ENCODE measurements at regions of chr11 and their contacts with region 1.

Region 1: DNA sequence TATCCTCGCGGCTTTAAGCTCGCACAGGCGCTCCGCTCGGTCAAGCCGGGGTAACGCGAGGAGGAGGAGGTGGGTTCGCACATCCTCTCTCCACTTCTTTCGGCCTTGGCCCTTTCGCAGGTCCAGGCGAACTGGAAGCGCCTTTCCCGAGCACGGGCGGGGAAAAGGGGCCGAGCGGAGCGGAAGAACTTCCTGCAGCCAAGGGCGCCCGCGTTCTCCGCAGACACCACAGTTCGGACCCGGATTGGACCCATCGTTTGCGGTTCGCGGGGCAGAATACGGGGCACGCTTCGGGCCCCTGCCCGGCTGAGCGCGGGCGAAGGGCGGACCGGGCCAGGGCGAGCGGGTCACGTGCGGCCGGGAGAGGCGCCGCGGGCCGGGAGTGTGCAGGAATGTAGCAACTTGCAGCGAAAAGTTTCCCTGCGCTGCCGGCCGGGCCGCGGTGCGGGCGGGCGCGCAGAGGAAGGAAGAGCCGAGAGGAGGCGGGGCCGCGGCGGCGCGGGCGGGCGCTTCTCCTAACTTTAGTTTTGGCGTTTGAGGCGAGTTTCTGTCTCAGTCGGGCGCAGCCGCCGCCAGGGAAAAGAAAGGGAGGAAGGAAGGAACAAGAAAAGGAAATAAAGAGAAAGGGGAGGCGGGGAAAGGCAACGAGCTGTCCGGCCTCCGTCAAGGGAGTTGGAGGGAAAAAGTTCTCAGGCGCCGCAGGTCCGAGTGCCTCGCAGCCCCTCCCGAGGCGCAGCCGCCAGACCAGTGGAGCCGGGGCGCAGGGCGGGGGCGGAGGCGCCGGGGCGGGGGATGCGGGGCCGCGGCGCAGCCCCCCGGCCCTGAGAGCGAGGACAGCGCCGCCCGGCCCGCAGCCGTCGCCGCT is at the start of gene YAP1:
- DNase-seq: peak; percentile 94
- ATAC-seq: peak; percentile 90
- total RNA-seq, gene YAP1: 98.6 TPM

Region 2: DNA sequence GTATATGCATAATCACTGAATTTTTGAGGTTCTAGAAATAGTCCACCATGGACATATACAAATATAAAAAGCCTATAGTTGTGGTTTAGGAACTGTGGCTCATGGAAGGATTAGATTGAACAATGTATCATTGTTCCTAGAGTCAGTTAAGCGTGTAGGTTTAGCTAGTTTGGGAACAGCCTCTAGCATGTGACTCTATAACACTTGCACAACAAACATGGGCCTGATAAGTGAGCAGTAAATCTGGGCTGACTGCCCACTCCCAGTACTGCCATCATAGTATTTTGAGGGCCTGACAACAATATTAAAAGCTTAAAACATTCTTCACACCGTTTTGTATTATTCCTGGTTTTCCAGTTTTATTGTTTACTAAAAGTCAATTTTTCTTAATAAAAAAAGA is 47.1 kb after region 1 on chr11:
- intact Hi-C with region 1: loop called (anchors 5 kb)
- DNase-seq: peak; percentile 68
- ATAC-seq: peak; percentile 95

Region 3: DNA sequence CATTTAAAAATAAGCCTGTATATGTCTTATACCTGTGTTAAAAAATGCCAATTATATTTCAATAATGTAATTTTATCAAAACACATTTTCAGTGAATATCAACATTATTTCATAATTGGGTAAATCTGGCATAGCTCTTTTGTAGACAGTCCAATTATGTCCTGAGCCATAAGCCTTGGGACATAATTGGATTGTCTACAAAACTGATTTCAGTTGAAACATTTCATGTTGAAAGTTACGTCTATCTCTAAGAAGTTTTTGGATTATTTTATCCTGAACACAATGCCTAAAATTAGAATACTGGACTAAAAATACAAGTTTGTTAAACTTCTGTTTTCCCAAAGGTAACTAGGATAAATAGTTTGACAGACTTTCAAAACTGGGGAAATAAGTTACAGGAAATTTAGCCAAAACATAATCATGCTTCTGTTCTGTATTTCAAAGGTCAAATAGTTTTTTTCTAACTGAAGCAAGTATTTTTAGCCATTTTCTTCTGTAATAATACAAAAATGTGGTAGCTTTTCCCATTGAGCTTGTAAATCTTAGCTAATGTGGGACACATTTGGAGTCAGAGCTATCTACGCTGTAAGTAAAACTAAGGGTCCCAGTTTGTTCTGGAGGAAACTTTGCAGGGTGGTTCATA is 106.4 kb after region 1 on chr11:
- intact Hi-C with region 1: loop called (anchors 10 kb)
- DNase-seq: no peak
- ATAC-seq: peak; percentile 52

Measured in left ventricle myocardium superior (tissue), 1 donor.